ENCODE measurements at regions of chr2 and their contacts with region 1.

Region 1: GRCh38 chr2:191728750-191729624 is 51.1 kb downstream of the NABP1 start:
- DNase-seq: peak; percentile 44
- ATAC-seq: peak; percentile 78
- H3K4me3 ChIP-seq: no peak overlapping the region
- H3K27ac ChIP-seq: no peak overlapping the region
- H3K4me1 ChIP-seq: peaks cover 8% of the 10 kb centered on the region
- H3K27me3 ChIP-seq: no peaks in the 10 kb centered on the region
- CTCF ChIP-seq: peak; percentile 32

Region 2: GRCh38 chr2:191593622-191594416 is 135.2 kb before region 1 on chr2:
- CTCF ChIA-PET with region 1: interaction called, 11 read pairs
- POLR2A ChIA-PET with region 1: no interaction called
- intact Hi-C with region 1: no loop called
- DNase-seq: peak; percentile 98
- ATAC-seq: peak; percentile 96
- H3K4me3 ChIP-seq: peak overlapping the region; percentile 49; the same call in 1 of the 2 replicates
- H3K27ac ChIP-seq: peak overlapping the region; percentile 95
- H3K4me1 ChIP-seq: peaks cover 23% of the 10 kb centered on the region
- H3K27me3 ChIP-seq: no peaks in the 10 kb centered on the region
- CTCF ChIP-seq: no peak

Region 3: GRCh38 chr2:191691016-191691735 is 37.8 kb before region 1 on chr2:
- CTCF ChIA-PET with region 1: no interaction called
- POLR2A ChIA-PET with region 1: no interaction called
- intact Hi-C with region 1: loop called (anchors 2 kb)
- DNase-seq: peak; percentile 92
- ATAC-seq: peak; percentile 45
- H3K4me3 ChIP-seq: no peak overlapping the region
- H3K27ac ChIP-seq: peak overlapping the region; percentile 26
- H3K4me1 ChIP-seq: peaks cover 49% of the 10 kb centered on the region
- H3K27me3 ChIP-seq: no peaks in the 10 kb centered on the region
- CTCF ChIP-seq: peak; percentile 93

Region 4: DNA sequence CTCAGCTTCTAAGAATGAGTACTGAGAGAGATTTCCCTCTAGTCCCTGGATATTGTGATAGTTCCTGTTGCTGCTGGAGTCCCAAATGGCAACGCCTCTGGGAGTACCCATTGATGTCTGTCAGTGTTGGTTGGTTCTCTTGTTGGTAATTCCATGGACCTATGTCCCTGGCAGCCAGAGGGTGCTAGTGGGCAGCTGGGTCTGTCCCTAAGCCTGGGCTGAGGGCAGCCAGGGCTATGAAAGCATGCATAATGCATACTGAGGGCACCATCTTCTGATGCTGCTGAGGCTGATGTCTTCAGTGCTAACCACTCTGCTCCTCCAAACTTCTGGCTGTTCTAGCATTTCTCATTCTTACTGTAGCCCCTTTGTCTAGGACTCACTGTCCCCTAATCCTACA is 15.2 kb before region 1 on chr2:
- CTCF ChIA-PET with region 1: no interaction called
- POLR2A ChIA-PET with region 1: no interaction called
- intact Hi-C with region 1: no loop called
- DNase-seq: peak; percentile 45
- ATAC-seq: peak; percentile 61
- H3K4me3 ChIP-seq: no peak overlapping the region
- H3K27ac ChIP-seq: no peak overlapping the region
- H3K4me1 ChIP-seq: 0 out of 2 replicates have a peak, but pooled peaks cover 5% of the 10 kb centered on the region
- H3K27me3 ChIP-seq: no peaks in the 10 kb centered on the region
- CTCF ChIP-seq: peak; percentile 56

Measured in PC-3 (cell line).